ENCODE measurements at regions of chr3 and their contacts with region 1.

Region 1: DNA sequence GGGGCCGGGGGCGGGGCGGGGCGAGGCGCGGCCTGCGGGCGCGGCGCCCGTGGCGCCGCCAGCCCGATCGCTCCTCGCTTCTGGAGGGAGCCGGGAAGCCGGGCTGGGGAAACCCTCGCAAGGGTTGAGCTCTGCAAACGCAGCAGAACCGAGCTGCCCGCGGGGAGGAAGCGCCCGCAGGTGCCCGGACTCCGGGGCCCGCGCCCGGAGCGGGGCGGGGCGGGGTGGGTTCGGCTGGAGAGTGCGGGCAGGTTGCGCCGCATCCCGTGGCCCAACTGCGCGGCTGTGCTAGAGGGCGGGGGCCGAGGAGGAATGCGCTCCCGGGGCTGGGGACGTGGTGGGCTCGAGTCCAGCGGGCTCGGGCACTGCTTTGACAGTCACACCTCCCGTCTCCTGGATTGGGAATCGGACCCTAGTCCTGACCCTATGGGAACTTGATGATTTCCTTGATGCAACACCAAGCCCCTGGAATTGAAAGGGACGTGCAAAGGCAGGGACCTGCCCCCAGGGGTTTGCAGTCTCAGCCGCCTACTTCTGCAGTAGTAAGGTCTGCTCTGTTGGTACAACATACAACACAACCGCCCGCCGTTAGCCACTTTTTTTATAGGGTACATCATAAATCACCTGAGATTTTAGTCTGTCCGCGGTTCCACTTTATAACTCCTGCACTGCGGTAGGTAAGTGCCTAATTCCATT is 34.3 kb downstream of the ZBTB38 start:
- DNase-seq: no peak
- H3K4me3 ChIP-seq: peak overlapping the region; percentile 60 to 65 (median 61)
- H3K27ac ChIP-seq: peak overlapping the region; percentile 58
- H3K4me1 ChIP-seq: peaks cover 52% of the 10 kb centered on the region
- H3K27me3 ChIP-seq: no peaks in the 10 kb centered on the region
- CTCF ChIP-seq: no peak

Region 2: DNA sequence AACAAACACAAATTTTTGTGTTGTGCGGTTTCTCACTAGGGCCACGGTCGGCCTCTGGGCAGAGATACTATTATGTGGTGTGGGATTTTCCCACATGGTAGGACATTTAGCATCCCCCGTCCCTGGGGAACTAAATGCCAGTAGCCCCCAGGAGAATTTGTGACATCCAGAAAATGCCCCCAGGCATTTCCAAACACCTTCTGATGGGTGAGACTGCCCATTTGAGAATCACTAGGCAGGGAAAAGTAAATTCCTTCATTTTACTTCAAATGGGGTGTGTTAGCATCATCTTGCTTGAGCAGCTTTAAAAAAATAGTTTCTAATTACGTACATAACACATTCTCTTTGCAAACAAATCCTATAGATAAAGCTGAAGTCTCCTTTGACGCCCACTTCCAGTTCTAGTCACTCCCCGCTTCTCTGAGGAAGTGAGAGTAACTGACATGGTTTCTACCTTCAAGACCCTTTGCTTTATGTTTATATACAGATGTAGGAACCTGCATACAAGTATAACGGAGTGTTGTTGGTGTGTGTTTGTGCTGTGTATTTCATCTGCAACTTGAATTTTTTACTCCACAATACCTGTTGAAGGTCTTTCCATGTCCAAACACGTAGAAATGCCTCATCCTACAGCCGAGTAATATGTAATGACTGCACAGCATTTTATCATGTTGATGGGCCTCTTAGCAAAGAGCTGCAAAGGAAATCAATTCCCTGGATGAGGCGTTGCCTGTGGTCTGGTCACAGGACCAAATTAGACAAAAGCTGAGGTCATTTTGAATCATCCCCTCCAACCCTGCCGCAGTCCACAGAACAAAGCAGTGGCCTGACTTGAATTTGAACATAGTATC is 65.7 kb before region 1 on chr3:
- CTCF ChIA-PET with region 1: no interaction called
- dilution Hi-C with region 1: no loop called
- in situ Hi-C with region 1: no loop called
- intact Hi-C with region 1: loop called (anchors 2 kb)
- DNase-seq: peak; percentile 92
- H3K4me3 ChIP-seq: no peak overlapping the region
- H3K27ac ChIP-seq: peak overlapping the region; percentile 57
- H3K4me1 ChIP-seq: peaks cover 19% of the 10 kb centered on the region
- H3K27me3 ChIP-seq: no peaks in the 10 kb centered on the region
- CTCF ChIP-seq: no peak

Measured in mammary epithelial cell (primary cell).